WTC11 (cell line): ENCODE measurements at regions of chr20 and their contacts with region 1.

Region 1: GRCh38 chr20:34983995-34984735 is 28.5 kb downstream of the MYH7B start:
- DNase-seq: peak; percentile 44
- ATAC-seq: peak; percentile 61
- H3K4me3 Mint-ChIP-seq: peak overlapping the region; percentile 16
- H3K27ac Mint-ChIP-seq: no peak overlapping the region
- H3K4me1 Mint-ChIP-seq: peaks cover 48% of the 10 kb centered on the region
- H3K27me3 Mint-ChIP-seq: peaks cover 50% of the 10 kb centered on the region
- CTCF ChIP-seq: no peak

Region 2: GRCh38 chr20:35001596-35002362 is 17.6 kb after region 1 on chr20:
- CTCF ChIA-PET with region 1: interaction called, 22 read pairs
- POLR2A ChIA-PET with region 1: no interaction called
- DNase-seq: peak; percentile 66
- ATAC-seq: no peak; the same call in 1 of the 2 replicates
- H3K4me3 Mint-ChIP-seq: no peak overlapping the region
- H3K27ac Mint-ChIP-seq: no peak overlapping the region
- H3K4me1 Mint-ChIP-seq: peaks cover 6% of the 10 kb centered on the region
- H3K27me3 Mint-ChIP-seq: no peaks in the 10 kb centered on the region
- CTCF ChIP-seq: no peak